IMR-90 (cell line): ENCODE measurements at regions of chr2 and their contacts with region 1.

Region 1: DNA sequence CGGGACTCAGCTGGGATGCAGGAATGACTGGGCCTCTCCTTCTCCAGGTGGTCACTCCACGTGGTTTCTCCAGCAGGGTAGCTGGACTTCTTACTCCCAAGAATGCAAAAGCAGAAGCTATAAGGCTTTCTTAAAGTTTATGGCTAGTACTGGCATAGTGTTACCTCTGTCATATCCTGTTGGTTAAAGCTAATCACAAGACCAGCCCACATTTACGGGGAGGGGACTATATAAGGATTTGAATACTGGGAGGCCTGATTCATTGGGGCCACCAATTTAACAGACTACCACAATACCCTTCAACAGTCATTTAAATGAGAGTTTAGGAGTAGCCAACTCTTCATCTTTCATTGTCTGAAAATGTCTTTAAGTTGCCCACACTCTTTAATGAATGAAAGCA is 94.4 kb upstream of the TSPYL6 start:
- DNase-seq: no peak
- ATAC-seq: no peak
- H3K4me3 ChIP-seq: no peak overlapping the region
- H3K27ac ChIP-seq: no peak overlapping the region
- H3K4me1 ChIP-seq: no peaks in the 10 kb centered on the region
- H3K27me3 ChIP-seq: no peaks in the 10 kb centered on the region; the same call in 1 of the 2 replicates
- CTCF ChIP-seq: no peak
- POLR2A ChIP-seq: no peak
- RAD21 ChIP-seq: no peak

Region 2: GRCh38 chr2:54295911-54296310 is 54.5 kb before region 1 on chr2:
- CTCF ChIA-PET with region 1: no interaction called
- POLR2A ChIA-PET with region 1: no interaction called
- dilution Hi-C with region 1: no loop called
- in situ Hi-C with region 1: no loop called
- intact Hi-C with region 1: no loop called
- DNase-seq: no peak
- ATAC-seq: peak; percentile 66
- H3K4me3 ChIP-seq: no peak overlapping the region
- H3K27ac ChIP-seq: no peak overlapping the region
- H3K4me1 ChIP-seq: peaks cover 2% of the 10 kb centered on the region; the same call in 1 of the 2 replicates
- H3K27me3 ChIP-seq: peaks cover 2% of the 10 kb centered on the region; the same call in 1 of the 2 replicates
- CTCF ChIP-seq: no peak
- POLR2A ChIP-seq: no peak
- RAD21 ChIP-seq: no peak

Region 3: GRCh38 chr2:54416166-54416813 is 65.9 kb after region 1 on chr2:
- CTCF ChIA-PET with region 1: no interaction called
- POLR2A ChIA-PET with region 1: no interaction called
- dilution Hi-C with region 1: no loop called
- in situ Hi-C with region 1: no loop called
- intact Hi-C with region 1: loop called (anchors 5 kb)
- DNase-seq: peak; percentile 37
- ATAC-seq: no peak; the same call in 1 of the 2 replicates
- H3K4me3 ChIP-seq: no peak overlapping the region
- H3K27ac ChIP-seq: no peak overlapping the region
- H3K4me1 ChIP-seq: no peaks in the 10 kb centered on the region
- H3K27me3 ChIP-seq: no peaks in the 10 kb centered on the region
- CTCF ChIP-seq: no peak
- POLR2A ChIP-seq: no peak
- RAD21 ChIP-seq: no peak